ENCODE measurements at regions of chr6 and their contacts with region 1.

Region 1: DNA sequence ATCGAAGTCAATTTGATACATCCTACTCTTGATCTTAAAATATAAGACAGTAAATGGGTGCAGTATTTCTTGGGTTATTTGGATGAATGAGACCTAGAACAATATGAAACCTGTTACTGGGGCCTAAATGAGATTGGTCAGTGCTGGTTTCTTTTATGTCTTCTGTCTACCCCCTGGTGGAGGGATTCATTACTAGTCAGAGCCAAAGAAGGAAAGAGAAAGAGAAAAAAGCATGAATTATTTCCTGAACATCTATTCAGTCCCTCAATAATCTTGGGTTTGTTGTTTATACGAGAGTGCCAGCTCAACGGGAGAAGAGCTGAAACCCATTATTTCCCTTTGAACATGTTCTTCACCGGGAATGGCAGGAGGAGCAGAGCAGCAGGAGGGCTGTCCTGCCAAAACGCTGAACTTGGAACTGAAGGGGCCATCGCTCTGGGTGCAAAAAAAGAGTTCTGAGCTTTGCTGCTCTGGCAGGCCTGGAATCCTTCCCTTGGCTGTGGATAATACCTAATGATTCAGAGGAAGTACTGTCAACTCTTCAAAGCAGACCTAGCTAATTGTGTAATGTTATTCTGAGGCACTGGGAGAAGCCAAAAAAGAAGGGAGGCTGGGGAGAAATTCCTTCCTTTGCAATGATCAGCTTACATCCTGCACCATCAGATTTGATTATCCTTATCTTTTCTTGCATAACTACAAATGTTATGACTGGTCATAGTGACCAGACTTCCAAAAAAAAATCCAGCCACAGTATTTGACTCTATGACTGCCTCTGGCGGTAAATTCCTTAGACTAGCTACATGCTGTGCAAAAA is 72.0 kb downstream of the BLOC1S5 start:
- DNase-seq: peak; percentile 96
- H3K4me3 ChIP-seq: peak overlapping the region in 1 of 3 experiments; percentile 31
- H3K27ac ChIP-seq: peak overlapping the region; percentile 99
- H3K4me1 ChIP-seq: peaks cover 49% of the 10 kb centered on the region
- H3K27me3 ChIP-seq: no peaks in the 10 kb centered on the region
- CTCF ChIP-seq: peak; percentile 41 to 45
- POLR2A ChIP-seq: peak; percentile 70

Region 2: GRCh38 chr6:7260291-7261031 is 731.7 kb before region 1 on chr6:
- CTCF ChIA-PET with region 1: no interaction called
- POLR2A ChIA-PET with region 1: no interaction called
- dilution Hi-C with region 1: no loop called
- intact Hi-C with region 1: no loop called
- DNase-seq: no peak
- H3K4me3 ChIP-seq: peak overlapping the region in 2 of 3 experiments; percentile 33 to 51
- H3K27ac ChIP-seq: no peak overlapping the region
- H3K4me1 ChIP-seq: peaks cover 7% of the 10 kb centered on the region
- H3K27me3 ChIP-seq: no peaks in the 10 kb centered on the region
- CTCF ChIP-seq: no peak
- POLR2A ChIP-seq: no peak

Region 3: DNA sequence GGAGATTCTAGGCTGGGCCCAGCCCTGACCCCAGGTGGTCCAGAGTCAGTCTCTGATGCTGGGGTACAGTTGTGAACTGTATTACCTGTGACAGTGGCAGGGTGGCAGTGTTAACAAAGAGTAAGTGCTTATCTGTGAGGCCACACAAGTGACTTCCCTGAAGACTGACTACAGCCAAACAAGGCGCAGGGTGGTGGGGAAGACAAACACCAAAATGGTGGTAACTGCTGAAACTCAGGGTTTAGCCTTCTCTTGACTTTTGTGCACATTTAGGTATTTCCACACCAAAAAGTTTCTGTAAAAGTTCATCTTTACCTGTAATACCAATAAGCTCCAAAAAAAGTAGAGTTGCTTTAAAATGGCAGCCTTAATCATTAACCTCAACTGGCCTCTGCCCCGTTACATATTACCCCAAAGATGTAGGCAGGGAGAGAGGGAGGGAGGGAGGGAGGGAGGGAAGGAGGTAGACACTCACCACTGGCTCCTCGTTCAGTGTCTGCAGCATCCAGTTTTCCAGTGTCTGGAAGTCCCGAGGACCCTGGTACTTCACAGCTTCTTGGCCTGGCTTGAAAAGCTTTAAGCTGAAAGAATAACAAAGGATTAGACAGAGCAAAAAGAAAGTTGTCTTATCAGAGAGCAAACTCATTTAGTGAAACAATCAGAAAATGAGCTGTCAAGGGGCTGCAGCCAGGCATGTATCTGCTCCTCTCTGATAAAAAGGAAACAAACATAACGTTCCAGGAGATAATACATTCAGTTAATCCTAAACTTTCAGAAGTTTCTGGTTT is 92.9 kb before region 1 on chr6:
- CTCF ChIA-PET with region 1: interaction called, 78 read pairs
- POLR2A ChIA-PET with region 1: interaction called, 17 read pairs
- dilution Hi-C with region 1: no loop called
- intact Hi-C with region 1: loop called (anchors 1 kb)
- DNase-seq: peak; percentile 40
- H3K4me3 ChIP-seq: no peak overlapping the region
- H3K27ac ChIP-seq: peak overlapping the region; percentile 36
- H3K4me1 ChIP-seq: peaks cover 94% of the 10 kb centered on the region
- H3K27me3 ChIP-seq: no peaks in the 10 kb centered on the region
- CTCF ChIP-seq: no peak
- POLR2A ChIP-seq: peak; percentile 27

Region 4: DNA sequence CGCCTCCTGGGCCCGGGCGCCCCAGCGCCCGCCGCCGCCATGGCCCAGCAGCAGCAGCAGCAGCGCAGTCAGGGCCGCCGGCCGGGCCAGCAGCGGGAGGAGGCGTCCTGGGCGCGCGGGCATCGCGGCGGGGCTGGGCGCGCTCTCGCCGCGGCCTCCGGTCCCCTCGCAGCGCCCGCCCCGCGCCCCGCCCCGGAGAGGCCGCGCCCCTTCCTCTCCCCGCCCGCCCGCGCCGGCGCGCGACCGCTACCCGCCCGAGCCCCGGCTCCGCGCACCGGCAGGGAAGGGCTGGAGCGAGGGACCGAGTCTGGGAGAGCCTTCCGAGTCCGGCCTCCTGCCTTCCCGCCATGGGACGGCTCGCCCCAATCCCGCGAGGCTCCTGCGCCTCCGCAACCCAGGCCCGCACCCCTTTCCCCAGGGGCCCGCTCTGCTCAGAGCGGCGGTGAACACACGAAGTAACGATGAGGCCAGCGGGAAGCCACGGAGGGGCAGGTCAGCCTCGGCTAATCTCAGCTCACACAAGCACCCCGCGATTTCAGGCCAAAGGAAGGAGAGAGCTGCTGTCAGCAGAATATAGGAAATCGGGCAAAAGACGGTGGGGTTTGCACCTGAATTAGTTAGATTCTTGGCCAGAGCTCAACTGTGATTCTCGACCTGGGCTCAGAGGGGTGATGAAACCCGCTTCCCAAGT is 81.4 kb before region 1 on chr6 and contains the start of gene TXNDC5:
- CTCF ChIA-PET with region 1: interaction called, 37 read pairs
- POLR2A ChIA-PET with region 1: interaction called, 40 read pairs
- dilution Hi-C with region 1: no loop called
- intact Hi-C with region 1: loop called (anchors 1 kb)
- DNase-seq: peak; percentile 77
- H3K4me3 ChIP-seq: peak within 1 kb of the TSS; percentile 70 to 97 (median 76)
- H3K27ac ChIP-seq: peak within 1 kb of the TSS; percentile 94
- H3K4me1 ChIP-seq: peaks cover 45% of the 10 kb centered on the region
- H3K27me3 ChIP-seq: no peaks in the 10 kb centered on the region
- CTCF ChIP-seq: no peak
- POLR2A ChIP-seq: peak; percentile 76
- total RNA-seq, gene TXNDC5: 1,581 and 1,665 TPM in 2 replicates

Region 5: DNA sequence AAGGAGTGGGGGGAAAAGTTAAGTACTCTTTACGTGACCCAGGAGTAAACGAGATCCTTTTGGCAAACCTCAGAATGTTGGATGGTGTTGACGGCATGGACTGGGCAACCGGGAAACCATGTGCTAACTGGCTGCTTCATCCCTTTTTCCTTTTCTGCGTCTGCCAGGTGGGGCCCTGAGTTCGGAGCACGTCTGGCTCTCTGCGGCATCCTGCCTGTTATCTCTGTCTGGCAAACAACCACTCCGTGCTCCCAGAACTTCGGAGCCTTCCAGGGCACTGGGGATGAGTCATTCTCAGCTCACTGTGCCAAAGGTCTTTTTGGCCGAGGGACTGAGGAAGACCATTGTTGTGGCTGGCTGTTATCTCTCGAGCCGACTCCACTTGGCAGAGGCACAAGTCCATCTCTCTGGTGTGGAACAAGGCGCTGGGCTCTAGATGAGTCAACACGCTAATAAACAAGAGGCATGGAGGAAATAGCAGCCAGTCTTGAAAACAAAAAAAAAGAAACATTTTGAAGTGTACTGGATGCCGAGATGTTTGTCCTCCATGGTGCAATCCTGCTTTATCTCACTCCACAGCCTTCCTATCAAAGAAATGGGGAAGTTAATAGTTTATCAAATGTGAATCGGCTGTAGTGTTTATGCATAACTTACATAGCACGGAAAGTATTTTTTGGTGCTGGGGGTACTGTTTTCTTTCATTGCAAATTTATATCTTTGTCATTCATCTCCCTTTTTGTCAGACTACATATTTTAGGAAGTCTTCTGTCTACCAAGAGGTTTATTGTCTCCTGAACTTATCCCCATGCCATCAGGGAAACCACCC is 17.1 kb before region 1 on chr6:
- CTCF ChIA-PET with region 1: interaction called, 42 read pairs
- POLR2A ChIA-PET with region 1: interaction called, 33 read pairs
- dilution Hi-C with region 1: no loop called
- intact Hi-C with region 1: loop called (anchors 1 kb)
- DNase-seq: peak; percentile 100
- H3K4me3 ChIP-seq: no peak overlapping the region
- H3K27ac ChIP-seq: peak overlapping the region; percentile 85
- H3K4me1 ChIP-seq: peaks cover 36% of the 10 kb centered on the region
- H3K27me3 ChIP-seq: no peaks in the 10 kb centered on the region
- CTCF ChIP-seq: no peak
- POLR2A ChIP-seq: peak; percentile 67

Measured in endothelial cell of umbilical vein (primary cell).